Prostate gland (tissue), 2 donors: ENCODE measurements at regions of chr1 and their contacts with region 1.

Region 1: DNA sequence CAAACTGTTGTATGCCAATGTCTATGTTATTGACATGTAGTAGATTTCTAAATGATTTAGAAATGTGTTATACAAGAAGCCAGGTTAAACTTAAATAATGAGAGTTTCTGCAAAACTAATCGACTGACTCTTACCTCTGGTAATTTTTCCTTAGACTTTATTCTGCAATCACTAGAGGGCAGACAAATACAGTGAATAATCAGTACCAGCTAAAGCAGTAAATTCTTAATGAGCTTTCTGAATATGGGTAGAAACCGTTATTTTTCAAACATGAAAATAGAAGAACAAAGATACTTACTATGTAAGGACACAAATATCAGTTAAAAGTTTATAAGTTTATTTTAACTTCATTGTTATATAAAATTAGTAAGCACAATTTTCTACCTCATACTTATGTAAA is 97.9 kb upstream of the RGS1 start:
- DNase-seq: no peak
- H3K4me3 ChIP-seq: no peak overlapping the region
- H3K27ac ChIP-seq: no peak overlapping the region
- H3K4me1 ChIP-seq: no peaks in the 10 kb centered on the region
- H3K27me3 ChIP-seq: no peaks in the 10 kb centered on the region
- CTCF ChIP-seq: peak; percentile 35 to 82 (median 56)
- POLR2A ChIP-seq: no peak

Region 2: GRCh38 chr1:192580351-192580962 is 102.8 kb after region 1 on chr1:
- intact Hi-C with region 1: loop called (anchors 1 kb)
- DNase-seq: peak; percentile 19
- H3K4me3 ChIP-seq: no peak overlapping the region
- H3K27ac ChIP-seq: no peak overlapping the region
- H3K4me1 ChIP-seq: peaks cover 3% of the 10 kb centered on the region
- H3K27me3 ChIP-seq: no peaks in the 10 kb centered on the region
- CTCF ChIP-seq: peak in 3 of 4 experiments; percentile 24 to 49 (median 46)
- POLR2A ChIP-seq: no peak

Region 3: GRCh38 chr1:192609110-192610079 is 131.8 kb after region 1 on chr1:
- intact Hi-C with region 1: loop called (anchors 2 kb)
- DNase-seq: peak; percentile 11
- H3K4me3 ChIP-seq: no peak overlapping the region
- H3K27ac ChIP-seq: no peak overlapping the region
- H3K4me1 ChIP-seq: no peaks in the 10 kb centered on the region
- H3K27me3 ChIP-seq: no peaks in the 10 kb centered on the region
- CTCF ChIP-seq: no peak
- POLR2A ChIP-seq: no peak

Region 4: DNA sequence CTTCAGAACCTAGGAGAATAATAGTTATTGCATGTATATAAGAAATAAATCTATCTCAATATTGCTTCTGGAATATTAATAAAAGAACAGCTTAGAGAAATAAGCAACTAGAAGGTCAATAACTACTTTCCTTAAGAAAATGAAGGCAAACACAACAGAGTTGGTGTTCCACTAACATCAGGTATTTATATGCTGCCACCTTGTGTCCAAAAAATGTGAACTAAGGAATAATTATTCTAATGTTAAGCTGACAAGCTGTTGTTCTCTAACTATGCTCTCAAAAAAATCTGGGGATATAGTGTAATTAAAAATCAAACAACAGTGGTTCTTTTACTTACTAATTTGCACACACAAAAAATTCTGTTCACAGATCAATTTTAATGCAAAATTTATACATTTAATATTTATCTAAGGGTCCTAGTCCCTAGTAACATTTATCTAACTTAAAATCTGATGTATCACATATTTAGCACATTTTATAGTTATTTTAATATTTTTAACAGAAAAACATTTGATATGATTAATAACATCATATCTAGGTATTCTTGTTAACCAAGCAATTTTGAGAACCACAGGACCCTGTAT is 541.9 kb after region 1 on chr1:
- intact Hi-C with region 1: loop called (anchors 2 kb)
- DNase-seq: peak; percentile 34
- H3K4me3 ChIP-seq: no peak overlapping the region
- H3K27ac ChIP-seq: no peak overlapping the region
- H3K4me1 ChIP-seq: no peaks in the 10 kb centered on the region
- H3K27me3 ChIP-seq: no peaks in the 10 kb centered on the region
- CTCF ChIP-seq: peak; percentile 29 to 78 (median 68)
- POLR2A ChIP-seq: no peak

Region 5: DNA sequence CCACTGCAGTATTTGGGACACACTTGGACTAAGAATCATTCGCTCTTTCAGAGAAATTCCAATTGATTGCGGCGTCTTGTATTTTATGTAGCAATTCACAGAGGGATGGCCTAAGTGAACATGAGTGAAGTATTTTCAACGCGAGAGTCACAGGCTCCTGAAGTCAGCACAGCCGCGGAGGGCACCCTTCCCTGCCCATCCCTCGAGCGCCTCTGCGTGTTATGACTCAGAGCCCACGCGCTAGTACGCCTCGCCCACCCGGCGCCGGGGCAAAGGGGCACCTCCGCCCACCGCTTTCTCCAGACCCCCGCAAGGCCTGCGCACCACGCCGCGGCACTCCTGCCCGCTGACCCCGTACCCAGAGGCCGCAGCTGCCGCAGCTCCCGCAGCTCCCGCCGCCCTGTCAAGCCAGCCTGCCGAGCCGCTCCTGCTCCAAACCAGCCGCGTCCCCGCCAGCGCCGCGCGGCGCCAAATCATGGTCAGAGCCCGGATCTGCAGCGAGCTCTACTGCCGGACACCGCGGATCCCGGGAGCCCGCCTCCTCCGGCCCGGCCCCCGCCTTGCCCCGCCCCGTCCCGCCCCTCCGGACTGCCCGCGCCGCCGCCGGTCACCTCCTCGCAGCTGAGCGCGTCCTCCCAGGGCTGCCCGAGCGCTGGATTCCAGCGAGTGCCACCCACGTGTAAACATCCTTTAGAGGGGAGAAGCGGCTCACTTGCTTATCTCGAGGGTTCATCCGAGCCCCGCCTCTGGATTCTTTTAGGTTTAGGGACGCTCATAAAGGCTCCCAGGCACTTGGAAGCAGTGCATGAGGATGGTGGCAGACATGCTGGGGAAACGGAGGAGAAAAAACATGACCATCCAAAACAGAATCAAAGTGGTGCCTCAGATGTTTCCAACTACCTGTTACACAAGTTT is 627.5 kb after region 1 on chr1 and contains the start of gene GLRX2:
- intact Hi-C with region 1: loop called (anchors 10 kb)
- DNase-seq: peak; percentile 88
- H3K4me3 ChIP-seq: peak within 1 kb of the TSS; percentile 90 to 94
- H3K27ac ChIP-seq: peak within 1 kb of the TSS; percentile 89 to 92
- H3K4me1 ChIP-seq: no peaks in the 10 kb centered on the region
- H3K27me3 ChIP-seq: no peaks in the 10 kb centered on the region
- CTCF ChIP-seq: peak in 1 of 4 experiments; percentile 15
- POLR2A ChIP-seq: peak; percentile 77
- total RNA-seq, gene GLRX2: 6.5 to 13.6 TPM

Region 6: GRCh38 chr1:193121616-193122593 is 644.3 kb after region 1 on chr1 and contains the start of gene CDC73:
- intact Hi-C with region 1: loop called (anchors 5 kb)
- DNase-seq: peak; percentile 96
- H3K4me3 ChIP-seq: peak within 1 kb of the TSS; percentile 68 to 77
- H3K27ac ChIP-seq: peak within 1 kb of the TSS; percentile 93 to 94
- H3K4me1 ChIP-seq: no peaks in the 10 kb centered on the region
- H3K27me3 ChIP-seq: no peaks in the 10 kb centered on the region
- CTCF ChIP-seq: peak; percentile 92 to 99 (median 96)
- POLR2A ChIP-seq: peak; percentile 86
- total RNA-seq, gene CDC73: 36.2 to 48.0 TPM